Ascending aorta (tissue), 2 donors: ENCODE measurements at regions of chr4 and their contacts with region 1.

Region 1: DNA sequence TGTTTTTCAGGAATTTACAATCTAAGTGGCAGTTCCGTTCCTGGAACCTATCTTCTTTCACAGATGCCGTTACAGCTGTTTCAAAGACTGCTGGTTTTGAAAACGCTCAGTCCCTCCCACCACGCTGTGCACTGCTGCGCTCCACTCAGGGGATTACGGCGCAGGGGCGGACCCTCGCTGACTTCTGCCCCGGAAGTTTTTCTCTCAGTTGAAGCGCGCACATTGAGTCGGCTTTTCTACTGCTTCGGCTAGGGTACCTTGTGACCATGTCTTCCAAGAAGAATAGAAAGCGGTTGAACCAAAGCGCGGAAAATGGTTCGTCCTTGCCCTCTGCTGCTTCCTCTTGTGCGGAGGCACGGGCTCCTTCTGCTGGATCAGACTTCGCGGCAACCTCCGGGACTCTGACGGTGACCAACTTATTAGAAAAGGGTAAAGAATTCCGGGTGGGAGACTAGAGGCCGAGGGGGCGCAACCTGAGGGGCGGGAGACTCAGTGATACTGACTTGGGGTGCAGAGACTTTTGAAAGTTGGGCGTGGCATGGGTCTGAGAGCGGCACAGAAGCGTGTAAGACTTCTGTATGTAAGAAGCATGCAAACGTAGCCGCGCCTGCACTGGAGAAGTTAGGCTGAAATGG is 597 bp upstream of the NUDT6 start:
- DNase-seq: peak in 1 of 2 donors; percentile 92
- H3K4me3 ChIP-seq: peak overlapping the region; percentile 76 to 85
- H3K27ac ChIP-seq: peak overlapping the region; percentile 71 to 77
- H3K4me1 ChIP-seq: peaks cover 4 to 12% of the 10 kb centered on the region in 2 donors
- H3K27me3 ChIP-seq: no peaks in the 10 kb centered on the region
- CTCF ChIP-seq: peak in 1 of 3 experiments; percentile 5

Region 2: DNA sequence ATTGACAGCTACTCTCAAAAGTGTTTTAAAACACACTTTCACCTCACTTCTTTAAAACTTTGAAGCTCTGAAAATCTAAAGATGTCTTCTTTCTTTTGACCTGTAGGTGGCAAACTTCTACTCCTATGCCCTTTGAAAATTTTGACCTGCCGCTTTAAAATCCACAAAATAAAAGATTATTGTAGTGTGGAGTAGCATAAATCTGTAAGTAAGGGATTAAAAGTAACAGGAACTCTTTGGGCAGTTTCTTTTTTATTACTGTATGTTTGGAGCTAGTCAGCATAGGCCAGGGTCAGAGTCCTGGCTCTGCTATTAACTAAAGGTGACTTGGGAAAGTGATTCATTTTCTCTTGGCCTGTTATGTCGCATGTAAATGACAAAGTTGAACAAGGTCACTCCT is 165.0 kb before region 1 on chr4:
- intact Hi-C with region 1: loop called (anchors 2 kb)
- DNase-seq: no peak
- H3K4me3 ChIP-seq: no peak overlapping the region
- H3K27ac ChIP-seq: no peak overlapping the region
- H3K4me1 ChIP-seq: no peaks in the 10 kb centered on the region
- H3K27me3 ChIP-seq: no peaks in the 10 kb centered on the region
- CTCF ChIP-seq: peak; percentile 51 to 82 (median 64)